HEK293 (cell line): ENCODE measurements at regions of chr11 and their contacts with region 1.

Region 1: DNA sequence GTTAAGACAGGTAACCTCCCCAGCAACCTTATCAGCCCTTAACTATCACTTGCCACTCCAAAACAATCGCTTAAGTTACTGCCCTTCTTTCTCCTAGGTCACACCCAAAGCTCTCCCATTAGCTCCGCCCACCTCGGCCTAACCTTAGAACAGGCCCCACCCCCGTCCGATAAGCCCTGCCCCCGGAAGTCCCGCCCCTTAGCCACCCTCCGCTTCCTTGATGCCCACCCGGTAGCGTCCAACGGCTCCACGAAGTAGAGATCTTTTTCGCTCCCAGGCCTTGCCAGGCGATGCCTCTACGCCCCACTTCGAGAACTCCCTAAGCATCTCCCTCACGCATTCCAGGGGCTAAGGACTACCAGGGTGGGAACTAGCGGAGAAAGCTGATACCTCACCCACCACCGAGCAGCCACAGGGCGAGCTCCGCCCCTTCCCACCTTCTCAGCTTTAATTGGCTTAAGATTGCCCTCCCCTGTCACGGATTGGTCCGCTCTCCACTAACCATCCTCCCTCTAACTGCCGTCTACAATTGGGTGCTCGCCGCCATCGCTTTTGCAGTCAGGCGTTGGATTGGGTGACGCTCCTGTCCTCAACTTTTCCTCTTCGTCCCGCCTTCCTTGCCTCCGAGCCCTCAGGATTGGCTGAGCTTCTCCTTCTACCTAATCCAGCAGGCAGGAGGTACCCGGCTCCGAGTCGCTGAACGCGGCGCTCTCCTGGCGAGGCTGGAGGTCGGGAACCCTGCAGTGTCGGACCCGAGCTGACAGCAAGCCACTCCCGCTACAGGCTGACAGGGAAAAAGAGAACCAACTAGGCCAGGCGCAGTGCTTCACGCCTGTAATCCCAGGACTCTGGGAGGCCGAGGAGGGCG is at the start of gene ZBTB3:
- H3K4me3 ChIP-seq: peak within 1 kb of the TSS; percentile 73
- H3K27ac ChIP-seq: peak within 1 kb of the TSS; percentile 32; the same call in 1 of the 2 replicates
- H3K4me1 ChIP-seq: no peaks in the 10 kb centered on the region
- CTCF ChIP-seq: no peak

Region 2: GRCh38 chr11:62705880-62706849 is 47.8 kb before region 1 on chr11:
- CTCF ChIA-PET with region 1: no interaction called
- POLR2A ChIA-PET with region 1: interaction called, 15 read pairs
- H3K4me3 ChIP-seq: peak overlapping the region; percentile 62
- H3K27ac ChIP-seq: peak overlapping the region; percentile 62
- H3K4me1 ChIP-seq: peaks cover 3% of the 10 kb centered on the region; the same call in 1 of the 2 replicates
- CTCF ChIP-seq: no peak

Region 3: DNA sequence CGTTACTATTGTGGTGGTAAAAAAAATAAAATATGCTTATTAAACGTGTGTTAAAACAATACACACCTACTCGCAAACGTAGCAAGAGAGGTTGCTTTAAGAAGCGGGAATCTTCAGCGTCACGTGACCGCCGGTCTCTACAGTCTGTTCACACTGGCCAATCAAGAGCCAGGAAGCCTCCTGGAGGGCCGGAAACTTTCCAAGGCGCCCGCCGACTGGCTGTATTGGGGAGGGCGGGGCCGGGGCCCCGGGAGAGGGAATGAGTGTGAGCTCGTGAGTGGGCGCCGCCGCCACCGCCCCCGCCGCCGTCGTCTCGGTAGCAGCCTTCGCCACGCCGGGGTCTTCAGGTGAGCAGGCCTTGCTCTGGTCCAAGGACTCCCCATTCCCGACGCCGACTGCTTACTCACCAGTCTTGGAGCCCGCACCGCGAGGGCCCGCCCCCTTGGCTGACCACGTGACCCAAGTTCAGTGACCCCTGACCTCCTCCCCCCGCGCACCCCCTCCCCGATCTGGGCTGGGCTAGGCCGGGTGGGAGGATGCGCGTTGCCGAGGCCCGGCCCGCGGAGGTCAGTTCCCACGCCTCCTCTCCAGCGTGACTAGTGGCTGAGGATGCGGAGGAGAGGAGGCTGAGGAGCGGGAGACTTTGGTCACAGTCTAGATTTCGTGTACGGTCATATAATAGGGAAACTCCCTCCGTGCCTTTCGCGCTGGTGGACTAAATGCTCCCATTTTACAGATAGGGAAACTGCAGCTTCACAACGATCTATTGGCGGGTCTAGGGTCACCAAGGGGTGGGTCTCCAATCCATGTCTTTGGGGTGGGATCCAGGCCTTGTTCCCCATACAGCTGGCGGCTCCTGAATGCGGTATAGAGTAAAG is 17.4 kb after region 1 on chr11 and contains the start of gene TAF6L:
- CTCF ChIA-PET with region 1: interaction called, 11 read pairs
- POLR2A ChIA-PET with region 1: interaction called, 68 read pairs
- H3K4me3 ChIP-seq: peak within 1 kb of the TSS; percentile 71
- H3K27ac ChIP-seq: peak within 1 kb of the TSS; percentile 72
- H3K4me1 ChIP-seq: no peaks in the 10 kb centered on the region
- CTCF ChIP-seq: no peak; the same call in 1 of the 2 replicates

Region 4: GRCh38 chr11:62855571-62856332 is 101.8 kb after region 1 on chr11:
- CTCF ChIA-PET with region 1: no interaction called
- POLR2A ChIA-PET with region 1: interaction called, 19 read pairs
- H3K4me3 ChIP-seq: peak overlapping the region; percentile 88
- H3K27ac ChIP-seq: peak overlapping the region; percentile 82
- H3K4me1 ChIP-seq: no peaks in the 10 kb centered on the region
- CTCF ChIP-seq: no peak

Region 5: GRCh38 chr11:62880803-62881578 is 127.0 kb after region 1 on chr11 and contains the start of gene SLC3A2:
- CTCF ChIA-PET with region 1: interaction called, 3 read pairs
- POLR2A ChIA-PET with region 1: interaction called, 16 read pairs
- H3K4me3 ChIP-seq: peak within 1 kb of the TSS; percentile 93
- H3K27ac ChIP-seq: peak within 1 kb of the TSS; percentile 98
- H3K4me1 ChIP-seq: no peaks in the 10 kb centered on the region
- CTCF ChIP-seq: peak; percentile 97